Sciatic nerve (tissue), 2 donors: ENCODE measurements at regions of chr9 and their contacts with region 1.

Region 1: GRCh38 chr9:87324613-87325194 is 173.0 kb upstream of the DAPK1 start:
- DNase-seq: no peak
- ATAC-seq: peak; percentile 77

Region 2: GRCh38 chr9:86405926-86406325 is 918.8 kb before region 1 on chr9:
- intact Hi-C with region 1: loop called (anchors 10 kb)
- DNase-seq: no peak
- ATAC-seq: peak; percentile 55